HEK293 (cell line): ENCODE measurements at regions of chr5 and their contacts with region 1.

Region 1: GRCh38 chr5:14351845-14352712 is 208.9 kb downstream of the TRIO start:
- H3K4me3 ChIP-seq: no peak overlapping the region
- H3K27ac ChIP-seq: no peak overlapping the region
- H3K4me1 ChIP-seq: no peaks in the 10 kb centered on the region
- CTCF ChIP-seq: peak; percentile 82

Region 2: DNA sequence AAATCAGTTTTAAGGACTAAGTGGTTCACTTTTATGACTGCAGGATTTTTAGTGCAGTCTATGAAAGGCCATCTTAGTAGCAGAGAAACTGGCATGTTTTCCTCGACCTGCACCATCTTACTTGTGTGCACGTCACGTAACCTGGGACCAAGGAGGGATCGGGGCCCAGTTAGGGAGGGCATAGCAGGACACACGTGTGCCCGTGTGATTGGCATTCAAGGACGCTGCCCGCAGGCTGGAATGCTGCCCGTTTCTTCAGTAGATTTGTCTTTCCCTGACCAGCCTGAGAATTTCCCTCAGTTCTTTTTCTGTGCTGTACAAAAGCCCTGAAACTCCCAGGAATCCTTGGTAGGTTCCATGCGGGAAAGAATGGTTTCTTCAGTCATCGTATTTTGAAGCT is 12.6 kb before region 1 on chr5:
- CTCF ChIA-PET with region 1: interaction called, 11 read pairs
- POLR2A ChIA-PET with region 1: no interaction called
- H3K4me3 ChIP-seq: no peak overlapping the region
- H3K27ac ChIP-seq: no peak overlapping the region
- H3K4me1 ChIP-seq: no peaks in the 10 kb centered on the region
- CTCF ChIP-seq: no peak

Region 3: DNA sequence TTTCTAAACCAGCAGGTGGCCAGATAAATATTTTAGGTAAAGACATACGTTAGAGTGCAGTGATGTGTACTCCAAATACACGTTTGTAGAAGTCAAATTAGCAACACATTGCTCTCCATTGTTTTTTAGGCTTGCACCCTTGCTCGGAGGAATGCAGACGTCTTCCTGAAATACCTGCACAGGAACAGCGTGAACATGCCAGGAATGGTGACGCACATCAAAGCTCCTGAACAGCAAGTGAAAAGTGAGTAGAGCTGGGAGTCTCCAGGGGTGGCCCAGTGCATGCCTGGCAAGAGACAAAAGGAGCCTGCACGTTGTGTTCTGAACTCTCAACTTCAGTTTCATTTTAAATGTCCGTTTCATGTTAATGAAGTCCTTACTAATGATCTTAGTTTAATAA is 22.0 kb after region 1 on chr5:
- CTCF ChIA-PET with region 1: interaction called, 15 read pairs
- POLR2A ChIA-PET with region 1: no interaction called
- H3K4me3 ChIP-seq: no peak overlapping the region
- H3K27ac ChIP-seq: no peak overlapping the region
- H3K4me1 ChIP-seq: no peaks in the 10 kb centered on the region
- CTCF ChIP-seq: no peak